A673 (cell line): ENCODE measurements at regions of chr3 and their contacts with region 1.

Region 1: DNA sequence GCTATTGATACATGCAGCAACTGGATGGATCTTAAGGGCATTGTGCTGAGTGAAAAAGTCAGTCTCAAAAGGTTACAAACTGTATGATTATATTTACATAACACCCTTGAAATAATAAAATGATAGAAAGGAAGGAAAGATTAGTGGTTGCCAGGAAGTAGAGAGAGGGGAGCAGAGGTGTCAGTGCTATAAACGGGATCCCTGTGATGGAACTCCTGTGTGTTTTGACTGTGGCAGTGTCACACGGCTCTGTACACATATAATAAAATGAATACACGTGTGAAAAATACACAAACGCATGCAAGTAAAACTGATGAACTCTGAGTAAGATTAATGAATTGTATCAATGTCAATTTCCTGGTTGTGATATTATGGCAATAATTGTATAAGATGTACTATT is 60.3 kb downstream of the TCAIM start:
- DNase-seq: no peak
- H3K4me3 ChIP-seq: no peak overlapping the region
- H3K27ac ChIP-seq: no peak overlapping the region
- H3K4me1 ChIP-seq: no peaks in the 10 kb centered on the region
- H3K27me3 ChIP-seq: no peaks in the 10 kb centered on the region
- CTCF ChIP-seq: no peak

Region 2: GRCh38 chr3:44568561-44568960 is 169.7 kb after region 1 on chr3:
- CTCF ChIA-PET with region 1: no interaction called
- POLR2A ChIA-PET with region 1: no interaction called
- intact Hi-C with region 1: no loop called
- DNase-seq: no peak
- H3K4me3 ChIP-seq: no peak overlapping the region
- H3K27ac ChIP-seq: no peak overlapping the region
- H3K4me1 ChIP-seq: no peaks in the 10 kb centered on the region
- H3K27me3 ChIP-seq: no peaks in the 10 kb centered on the region
- CTCF ChIP-seq: no peak

Region 3: GRCh38 chr3:45426161-45426560 is 1027.3 kb after region 1 on chr3:
- CTCF ChIA-PET with region 1: no interaction called
- POLR2A ChIA-PET with region 1: interaction called, 16 read pairs
- intact Hi-C with region 1: no loop called
- DNase-seq: no peak
- H3K4me3 ChIP-seq: no peak overlapping the region
- H3K27ac ChIP-seq: no peak overlapping the region
- H3K4me1 ChIP-seq: no peaks in the 10 kb centered on the region
- H3K27me3 ChIP-seq: no peaks in the 10 kb centered on the region
- CTCF ChIP-seq: no peak